ENCODE measurements at regions of chr4 and their contacts with region 1.

Region 1: DNA sequence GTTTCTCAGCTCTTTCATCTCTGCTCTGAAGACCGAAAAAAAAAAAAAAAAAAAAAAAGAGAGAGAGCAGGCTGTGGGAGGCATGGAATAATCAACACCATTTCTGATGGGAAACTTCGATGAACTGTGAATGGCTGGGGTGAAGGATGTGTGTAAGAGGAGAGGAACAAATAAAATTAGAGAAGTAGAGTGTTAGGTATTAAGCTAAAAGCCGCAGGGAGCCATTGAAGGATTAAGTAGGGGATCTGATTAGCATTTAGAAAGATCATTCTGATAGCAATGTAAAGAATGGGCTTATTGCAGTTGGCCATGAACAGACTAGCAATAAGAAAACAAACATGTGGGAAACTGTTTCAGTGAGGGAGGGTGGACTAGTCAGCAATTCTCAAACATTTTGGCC is 33.6 kb upstream of the JADE1 start:
- DNase-seq: peak; percentile 67
- H3K4me3 ChIP-seq: no peak overlapping the region
- H3K27ac ChIP-seq: no peak overlapping the region
- H3K4me1 ChIP-seq: peaks cover 16% of the 10 kb centered on the region
- H3K27me3 ChIP-seq: no peaks in the 10 kb centered on the region
- CTCF ChIP-seq: no peak

Region 2: DNA sequence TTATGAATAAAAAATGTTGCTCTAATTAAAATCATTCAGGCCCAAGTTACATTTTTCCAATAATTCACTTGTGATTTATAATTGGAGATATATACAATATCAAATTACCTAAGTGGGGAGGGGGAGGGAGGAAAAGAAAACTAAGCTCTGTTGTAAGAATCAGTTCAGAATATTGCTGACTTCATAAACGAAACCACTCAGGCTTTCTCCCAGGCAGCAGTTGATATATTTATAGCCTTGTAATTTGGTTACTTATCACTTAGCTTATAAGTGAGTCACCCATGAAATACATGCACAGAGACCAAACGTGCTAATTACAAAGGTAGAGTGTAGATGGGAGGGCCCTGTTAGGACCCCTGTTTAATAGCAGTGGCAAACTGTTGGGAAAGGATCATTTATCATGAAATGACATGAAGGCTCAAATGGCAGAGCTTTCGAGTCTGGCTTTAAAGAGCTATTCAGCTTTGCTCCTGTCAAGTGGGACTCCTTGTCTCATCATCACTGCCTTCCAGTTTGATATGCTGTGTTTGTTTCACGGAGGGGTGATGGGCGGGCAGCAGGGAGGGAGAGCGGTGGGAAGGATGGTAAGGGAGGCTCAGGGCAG is 382.7 kb before region 1 on chr4:
- CTCF ChIA-PET with region 1: no interaction called
- POLR2A ChIA-PET with region 1: interaction called, 19 read pairs
- intact Hi-C with region 1: no loop called
- DNase-seq: peak; percentile 37
- H3K4me3 ChIP-seq: no peak overlapping the region
- H3K27ac ChIP-seq: no peak overlapping the region
- H3K4me1 ChIP-seq: peaks cover 8% of the 10 kb centered on the region
- H3K27me3 ChIP-seq: no peaks in the 10 kb centered on the region
- CTCF ChIP-seq: no peak

Region 3: DNA sequence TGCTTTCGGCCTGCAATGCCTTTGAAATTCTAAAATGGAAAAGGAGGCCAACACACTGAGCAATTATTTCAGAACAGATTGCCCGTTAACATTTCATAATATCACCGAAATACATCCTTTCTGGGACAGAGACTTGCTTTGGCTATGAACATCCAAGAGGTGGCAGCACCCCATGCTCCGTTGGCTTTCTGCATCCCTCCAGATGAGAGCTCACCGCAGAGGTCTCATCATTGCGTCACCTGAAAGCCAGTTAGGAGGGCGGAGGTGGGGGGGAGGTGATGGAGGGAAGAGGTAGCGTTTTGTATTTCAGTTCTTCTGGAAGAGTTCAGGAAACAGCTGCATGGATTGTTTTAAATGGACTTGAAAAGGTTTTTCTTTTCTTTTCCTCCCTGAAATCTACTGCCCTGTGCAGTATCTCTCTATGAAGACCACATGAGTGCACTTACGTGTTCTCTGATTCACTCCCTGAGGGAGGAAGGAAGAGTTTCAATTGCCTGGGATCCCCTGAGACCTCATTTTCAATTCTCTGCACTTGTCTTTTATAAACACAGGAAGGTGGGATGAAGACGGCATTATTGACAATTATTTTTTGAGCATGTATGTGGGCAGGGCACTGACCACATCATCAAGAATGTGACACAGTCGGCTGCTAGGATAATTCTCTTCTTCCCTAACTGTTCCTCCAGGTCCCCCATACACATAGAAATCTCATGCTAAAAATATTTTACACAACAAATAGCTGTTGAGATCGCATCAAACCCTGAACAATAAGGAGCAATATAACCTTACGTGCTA is 321.4 kb before region 1 on chr4:
- CTCF ChIA-PET with region 1: no interaction called
- POLR2A ChIA-PET with region 1: no interaction called
- intact Hi-C with region 1: no loop called
- DNase-seq: peak; percentile 88
- H3K4me3 ChIP-seq: no peak overlapping the region
- H3K27ac ChIP-seq: no peak overlapping the region
- H3K4me1 ChIP-seq: no peaks in the 10 kb centered on the region
- H3K27me3 ChIP-seq: no peaks in the 10 kb centered on the region
- CTCF ChIP-seq: peak; percentile 84

Measured in A673 (cell line).